WTC11 (cell line): ENCODE measurements at regions of chr17 and their contacts with region 1.

Region 1: DNA sequence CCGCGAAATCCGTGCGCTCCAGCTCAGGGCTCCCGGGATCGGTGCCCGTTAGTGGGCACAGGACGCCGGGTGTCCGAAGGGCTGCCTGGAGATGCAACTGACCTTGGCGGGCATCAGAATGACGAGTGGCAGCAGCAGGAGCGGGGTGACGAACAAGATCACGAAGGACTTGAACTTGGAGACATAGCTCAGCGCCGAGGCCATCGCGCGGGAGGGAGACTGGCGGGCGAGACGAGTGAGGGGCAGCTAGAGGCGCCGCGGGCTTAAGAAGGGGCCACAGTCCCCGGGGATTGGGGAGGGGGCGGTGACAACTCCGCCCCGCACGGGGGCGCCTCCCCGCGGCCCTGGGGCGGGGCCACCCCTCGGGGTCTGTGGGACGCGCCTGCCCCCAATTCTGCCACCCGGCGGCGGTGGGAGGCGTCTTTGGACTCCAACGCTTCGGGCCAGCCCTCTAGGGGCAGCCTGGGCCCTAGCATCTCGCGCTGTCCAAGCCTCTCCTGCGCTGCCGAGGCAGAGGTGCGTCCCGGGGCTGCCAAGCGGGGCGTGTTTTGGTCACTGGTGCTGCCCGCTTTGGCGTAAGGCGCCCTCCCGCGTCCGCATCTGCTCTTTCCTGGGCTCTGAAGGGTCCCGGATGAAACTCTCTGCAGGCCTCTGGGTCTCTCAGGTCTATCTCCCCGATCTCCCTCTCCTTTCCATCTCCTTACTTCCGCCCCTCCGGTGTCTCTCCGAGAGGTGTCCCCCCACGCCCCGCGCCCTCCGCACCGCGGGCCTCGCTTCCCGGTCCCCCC is at the start of gene SLC13A5:
- DNase-seq: peak; percentile 87
- ATAC-seq: peak; percentile 90
- H3K4me3 Mint-ChIP-seq: peak within 1 kb of the TSS; percentile 92
- H3K27ac Mint-ChIP-seq: no peak within 1 kb of the TSS
- H3K4me1 Mint-ChIP-seq: peaks cover 21% of the 10 kb centered on the region
- H3K27me3 Mint-ChIP-seq: peaks cover 63% of the 10 kb centered on the region
- CTCF ChIP-seq: peak; percentile 29; the same call in 1 of the 2 replicates
- total RNA-seq, gene SLC13A5: 1.6 to 2.3 TPM (median 1.8 TPM) in 3 replicates

Region 2: DNA sequence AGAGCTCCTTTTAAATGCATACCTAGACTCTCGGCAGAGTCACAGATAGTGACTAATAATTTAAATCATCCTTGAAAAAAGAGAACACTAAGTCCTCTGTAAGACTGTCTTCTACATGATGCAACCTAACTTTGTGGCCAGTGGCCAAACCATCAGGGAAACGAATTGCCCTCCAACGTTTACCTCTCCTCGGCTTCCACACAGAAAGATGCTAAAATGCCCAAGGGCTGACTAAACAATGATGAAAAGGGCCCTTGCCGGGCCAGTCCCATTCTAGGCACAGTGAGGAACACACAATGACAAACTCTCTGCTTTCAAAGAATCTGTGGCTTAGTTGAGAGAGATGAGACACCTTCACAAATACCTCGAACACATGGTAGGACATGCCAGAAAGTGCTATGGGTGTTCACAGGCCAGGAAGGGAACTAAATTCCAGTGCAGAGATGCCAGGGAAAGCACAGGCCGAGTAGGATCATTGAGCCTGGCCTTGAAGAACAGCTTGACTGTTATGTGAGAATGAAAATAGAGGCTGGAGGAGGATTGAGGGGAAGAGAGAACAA is 121.6 kb before region 1 on chr17:
- CTCF ChIA-PET with region 1: no interaction called
- POLR2A ChIA-PET with region 1: no interaction called
- DNase-seq: no peak
- ATAC-seq: no peak
- H3K4me3 Mint-ChIP-seq: no peak overlapping the region
- H3K27ac Mint-ChIP-seq: peak overlapping the region; percentile 12
- H3K4me1 Mint-ChIP-seq: peaks cover 4% of the 10 kb centered on the region
- H3K27me3 Mint-ChIP-seq: no peaks in the 10 kb centered on the region
- CTCF ChIP-seq: no peak

Region 3: GRCh38 chr17:6666077-6666521 is 47.2 kb before region 1 on chr17:
- CTCF ChIA-PET with region 1: interaction called, 27 read pairs
- POLR2A ChIA-PET with region 1: no interaction called
- DNase-seq: peak; percentile 78
- ATAC-seq: peak; percentile 95
- H3K4me3 Mint-ChIP-seq: no peak overlapping the region
- H3K27ac Mint-ChIP-seq: no peak overlapping the region
- H3K4me1 Mint-ChIP-seq: peaks cover 12% of the 10 kb centered on the region
- H3K27me3 Mint-ChIP-seq: peaks cover 41% of the 10 kb centered on the region
- CTCF ChIP-seq: peak; percentile 68

Region 4: GRCh38 chr17:6677158-6677831 is 36.0 kb before region 1 on chr17:
- CTCF ChIA-PET with region 1: interaction called, 10 read pairs
- POLR2A ChIA-PET with region 1: interaction called, 3 read pairs
- DNase-seq: no peak
- ATAC-seq: no peak
- H3K4me3 Mint-ChIP-seq: no peak overlapping the region
- H3K27ac Mint-ChIP-seq: no peak overlapping the region
- H3K4me1 Mint-ChIP-seq: no peaks in the 10 kb centered on the region
- H3K27me3 Mint-ChIP-seq: no peaks in the 10 kb centered on the region
- CTCF ChIP-seq: no peak

Region 5: GRCh38 chr17:6701719-6702118 is 11.6 kb before region 1 on chr17:
- CTCF ChIA-PET with region 1: interaction called, 104 read pairs
- POLR2A ChIA-PET with region 1: no interaction called
- DNase-seq: peak; percentile 86
- ATAC-seq: peak; percentile 99
- H3K4me3 Mint-ChIP-seq: no peak overlapping the region
- H3K27ac Mint-ChIP-seq: no peak overlapping the region
- H3K4me1 Mint-ChIP-seq: peaks cover 6% of the 10 kb centered on the region
- H3K27me3 Mint-ChIP-seq: no peaks in the 10 kb centered on the region; the same call in 1 of the 2 replicates
- CTCF ChIP-seq: peak; percentile 55

Region 6: GRCh38 chr17:6753006-6753445 is 39.7 kb after region 1 on chr17:
- CTCF ChIA-PET with region 1: interaction called, 13 read pairs
- POLR2A ChIA-PET with region 1: no interaction called
- DNase-seq: peak; percentile 29
- ATAC-seq: peak; percentile 68
- H3K4me3 Mint-ChIP-seq: no peak overlapping the region
- H3K27ac Mint-ChIP-seq: peak overlapping the region; percentile 87; the same call in 1 of the 2 replicates
- H3K4me1 Mint-ChIP-seq: peaks cover 29% of the 10 kb centered on the region
- H3K27me3 Mint-ChIP-seq: no peaks in the 10 kb centered on the region
- CTCF ChIP-seq: no peak

Region 7: GRCh38 chr17:6853764-6854442 is 140.6 kb after region 1 on chr17:
- CTCF ChIA-PET with region 1: interaction called, 17 read pairs
- POLR2A ChIA-PET with region 1: no interaction called
- DNase-seq: peak; percentile 64
- ATAC-seq: peak; percentile 97
- H3K4me3 Mint-ChIP-seq: peak overlapping the region; percentile 78
- H3K27ac Mint-ChIP-seq: peak overlapping the region; percentile 66
- H3K4me1 Mint-ChIP-seq: peaks cover 23% of the 10 kb centered on the region
- H3K27me3 Mint-ChIP-seq: peaks cover 14% of the 10 kb centered on the region
- CTCF ChIP-seq: peak; percentile 72